A673 (cell line): ENCODE measurements at regions of chr9 and their contacts with region 1.

Region 1: GRCh38 chr9:127916665-127917613 is at the start of gene ST6GALNAC4:
- DNase-seq: peak; percentile 93
- H3K4me3 ChIP-seq: peak within 1 kb of the TSS; percentile 74
- H3K27ac ChIP-seq: no peak within 1 kb of the TSS
- H3K4me1 ChIP-seq: peaks cover 20% of the 10 kb centered on the region
- H3K27me3 ChIP-seq: no peaks in the 10 kb centered on the region
- CTCF ChIP-seq: no peak
- total RNA-seq, gene ST6GALNAC4: 11.8 and 15.8 TPM in 2 replicates

Region 2: GRCh38 chr9:126939821-126940221 is 977.1 kb before region 1 on chr9:
- CTCF ChIA-PET with region 1: interaction called, 7 read pairs
- POLR2A ChIA-PET with region 1: no interaction called
- intact Hi-C with region 1: loop called (anchors 5 kb)
- DNase-seq: no peak
- H3K4me3 ChIP-seq: no peak overlapping the region
- H3K27ac ChIP-seq: no peak overlapping the region
- H3K4me1 ChIP-seq: no peaks in the 10 kb centered on the region
- H3K27me3 ChIP-seq: no peaks in the 10 kb centered on the region
- CTCF ChIP-seq: no peak

Region 3: DNA sequence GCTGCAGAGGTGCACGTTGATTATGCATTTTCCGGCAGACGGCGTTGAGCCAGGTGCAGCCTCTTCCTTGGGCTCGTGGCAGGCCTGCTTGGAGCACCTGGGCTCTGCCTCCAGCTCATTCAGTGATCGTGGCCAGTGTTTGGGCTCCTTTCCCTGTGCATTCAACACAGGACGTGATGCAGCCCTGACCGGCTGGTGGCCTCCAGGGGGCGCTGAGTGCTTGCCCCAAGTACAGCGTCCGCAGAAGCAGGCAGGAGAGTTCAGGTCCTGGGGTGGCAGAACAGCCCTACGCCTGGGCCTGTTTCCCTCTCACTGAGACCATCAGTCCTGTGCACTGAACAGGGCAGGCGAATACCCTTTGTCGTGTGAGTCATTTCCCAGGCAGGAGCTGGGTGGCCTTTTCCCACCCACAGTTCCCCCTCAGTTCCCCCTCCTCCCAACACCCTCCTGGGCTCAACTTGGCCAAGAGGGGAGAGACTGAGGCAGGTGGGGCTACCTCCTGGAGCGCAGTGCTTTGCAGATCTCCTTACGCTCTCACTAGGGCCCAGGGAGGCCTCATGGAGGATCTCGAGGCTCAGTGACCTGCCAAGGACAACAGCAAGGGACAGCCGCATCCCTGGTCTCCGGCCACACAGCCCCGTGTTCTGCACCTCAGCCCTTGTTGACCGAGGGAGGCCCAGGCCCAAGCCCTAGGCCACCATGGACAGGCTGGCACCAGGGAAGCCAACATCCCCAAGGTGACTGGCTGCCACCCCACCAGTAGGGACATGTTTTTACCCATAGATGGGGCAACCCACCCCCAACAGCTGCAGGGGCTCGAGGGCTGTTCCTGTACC is 412.8 kb before region 1 on chr9:
- CTCF ChIA-PET with region 1: no interaction called
- POLR2A ChIA-PET with region 1: no interaction called
- intact Hi-C with region 1: loop called (anchors 5 kb)
- DNase-seq: peak; percentile 79
- H3K4me3 ChIP-seq: no peak overlapping the region
- H3K27ac ChIP-seq: no peak overlapping the region
- H3K4me1 ChIP-seq: no peaks in the 10 kb centered on the region
- H3K27me3 ChIP-seq: no peaks in the 10 kb centered on the region
- CTCF ChIP-seq: peak; percentile 91

Region 4: GRCh38 chr9:127734747-127735529 is 182.0 kb before region 1 on chr9 and contains the start of gene TOR2A:
- CTCF ChIA-PET with region 1: interaction called, 5 read pairs
- POLR2A ChIA-PET with region 1: interaction called, 4 read pairs
- intact Hi-C with region 1: loop called (anchors 2 kb)
- DNase-seq: peak; percentile 99
- H3K4me3 ChIP-seq: peak within 1 kb of the TSS; percentile 69
- H3K27ac ChIP-seq: peak within 1 kb of the TSS; percentile 83
- H3K4me1 ChIP-seq: peaks cover 10% of the 10 kb centered on the region
- H3K27me3 ChIP-seq: no peaks in the 10 kb centered on the region
- CTCF ChIP-seq: peak; percentile 98
- total RNA-seq, gene TOR2A: 9.1 and 9.2 TPM in 2 replicates

Region 5: DNA sequence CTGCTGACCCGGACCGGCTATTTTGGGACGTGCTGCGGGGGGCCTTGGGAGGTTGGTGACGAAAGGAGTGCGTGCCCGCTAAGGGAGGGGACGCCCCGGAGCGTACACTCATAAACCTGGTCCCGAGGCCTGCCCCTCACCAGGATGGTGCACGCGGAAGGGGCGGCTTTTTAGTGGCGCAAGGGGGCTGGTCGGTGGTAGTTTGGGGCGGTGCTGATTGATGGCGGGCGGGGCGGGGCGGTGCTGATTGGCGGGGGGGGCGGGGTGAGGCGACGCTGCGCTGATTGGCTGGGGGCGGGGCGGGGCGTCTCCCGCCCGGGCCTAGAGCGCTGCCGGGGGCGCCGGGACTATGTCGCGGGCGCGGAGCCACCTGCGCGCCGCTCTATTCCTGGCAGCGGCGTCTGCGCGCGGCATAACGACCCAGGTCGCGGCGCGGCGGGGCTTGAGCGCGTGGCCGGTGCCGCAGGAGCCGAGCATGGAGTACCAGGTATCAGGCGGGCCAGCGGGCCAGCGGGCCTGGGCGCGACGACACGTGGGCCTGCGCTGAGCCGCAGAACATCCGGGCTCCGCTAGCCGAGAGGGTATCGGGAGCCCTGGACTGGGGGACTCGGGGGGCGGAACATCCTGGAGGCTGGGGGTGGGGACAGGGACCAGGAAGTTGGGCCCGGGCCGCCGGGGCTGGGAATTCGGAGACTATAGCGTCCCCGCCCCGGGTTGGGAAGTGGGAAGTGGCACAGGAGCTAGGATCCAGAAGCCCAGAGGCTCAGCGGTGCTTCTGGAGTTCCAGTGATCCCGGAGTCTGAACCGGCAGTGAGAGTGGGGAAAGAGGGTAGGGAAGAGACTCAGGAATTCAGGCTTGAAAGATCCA is 114.1 kb before region 1 on chr9 and contains the start of gene FPGS:
- CTCF ChIA-PET with region 1: no interaction called
- POLR2A ChIA-PET with region 1: no interaction called
- intact Hi-C with region 1: loop called (anchors 5 kb)
- DNase-seq: peak; percentile 93
- H3K4me3 ChIP-seq: peak within 1 kb of the TSS; percentile 97
- H3K27ac ChIP-seq: peak within 1 kb of the TSS; percentile 96
- H3K4me1 ChIP-seq: peaks cover 14% of the 10 kb centered on the region
- H3K27me3 ChIP-seq: no peaks in the 10 kb centered on the region
- CTCF ChIP-seq: no peak
- total RNA-seq, gene FPGS: 74.9 and 78.2 TPM in 2 replicates

Region 6: DNA sequence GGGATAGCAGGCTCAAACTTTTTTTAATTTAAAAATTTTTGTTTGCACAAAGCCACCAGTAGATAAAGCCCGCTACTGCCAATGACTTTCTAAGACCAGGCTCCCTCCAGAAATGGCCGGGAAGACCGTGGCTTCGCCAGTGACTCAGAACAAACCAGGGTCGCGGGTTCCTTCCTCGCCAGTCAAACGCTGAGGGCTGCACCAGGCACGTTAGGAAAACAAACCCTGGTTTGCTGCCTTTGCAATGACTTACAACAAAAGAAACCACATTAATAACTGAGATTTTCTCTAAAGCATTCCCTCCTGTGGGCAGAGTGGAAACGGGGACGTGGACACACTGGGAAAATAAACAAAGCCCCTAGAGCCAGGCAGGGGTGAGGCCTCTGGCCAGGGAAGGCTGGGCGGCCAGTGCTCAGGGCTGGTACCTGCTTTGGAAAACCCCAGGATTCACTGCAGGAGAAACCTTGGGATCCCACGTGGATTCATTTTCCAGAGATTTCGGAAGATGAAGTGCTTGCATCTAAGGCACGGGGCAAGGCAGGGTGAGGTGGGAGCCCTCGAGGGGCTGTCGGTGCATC is 1752.3 kb after region 1 on chr9:
- CTCF ChIA-PET with region 1: no interaction called
- POLR2A ChIA-PET with region 1: no interaction called
- intact Hi-C with region 1: no loop called
- DNase-seq: no peak
- H3K4me3 ChIP-seq: no peak overlapping the region
- H3K27ac ChIP-seq: peak overlapping the region; percentile 85
- H3K4me1 ChIP-seq: peaks cover 46% of the 10 kb centered on the region
- H3K27me3 ChIP-seq: no peaks in the 10 kb centered on the region
- CTCF ChIP-seq: no peak